Cardiac septum (tissue), 1 donor: ENCODE measurements at regions of chr2 and their contacts with region 1.

Region 1: GRCh38 chr2:9333591-9334171 is 89.6 kb downstream of the ITGB1BP1 start:
- DNase-seq: no peak

Region 2: DNA sequence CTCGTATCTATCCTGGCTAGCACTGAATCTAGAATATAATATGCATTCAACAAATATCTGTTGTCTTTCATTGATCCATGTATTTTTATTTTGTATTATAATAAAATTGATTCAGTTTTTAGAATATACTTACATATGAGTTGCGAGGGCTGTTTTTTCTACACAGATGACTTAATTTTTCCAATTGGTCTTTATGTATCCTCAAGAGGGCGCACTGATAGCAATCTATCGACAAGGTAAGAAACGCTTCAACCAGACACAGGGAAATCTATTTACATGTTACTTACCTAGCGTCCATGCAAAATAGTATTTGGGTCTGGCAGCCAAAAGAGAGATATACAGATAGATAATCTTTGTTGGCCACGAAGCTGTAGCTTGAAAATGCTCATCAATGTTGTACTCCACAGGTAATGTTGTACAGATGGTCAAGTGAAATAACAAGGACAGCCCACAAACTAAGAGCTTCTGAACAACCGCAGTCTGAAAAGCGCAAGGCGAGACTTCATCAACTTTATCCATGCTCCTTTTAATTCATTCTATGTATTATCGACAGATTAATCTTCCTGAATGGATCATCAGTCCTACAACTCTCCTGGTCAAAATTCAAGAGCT is 460.8 kb before region 1 on chr2:
- intact Hi-C with region 1: loop called (anchors 10 kb)
- DNase-seq: no peak

Region 3: DNA sequence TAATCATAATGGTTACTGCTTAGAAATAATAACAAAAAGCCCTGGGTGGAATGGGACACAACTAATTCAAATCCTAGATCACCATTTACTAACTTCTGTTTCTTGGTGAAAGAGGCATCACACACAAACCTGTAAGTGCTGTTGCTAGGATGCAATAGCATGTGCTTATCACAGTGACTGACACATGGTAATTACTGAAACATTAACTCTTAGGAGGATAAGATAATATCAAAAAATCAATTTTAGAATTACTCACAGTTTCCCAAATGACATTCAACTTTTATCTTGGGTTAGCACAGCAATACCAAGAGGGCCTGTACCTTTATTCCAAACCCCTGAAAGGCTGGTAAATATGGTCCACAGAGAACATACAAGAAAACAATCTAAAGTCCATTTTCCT is 399.3 kb before region 1 on chr2:
- intact Hi-C with region 1: no loop called
- DNase-seq: no peak